ENCODE measurements at regions of chr6 and their contacts with region 1.

Region 1: DNA sequence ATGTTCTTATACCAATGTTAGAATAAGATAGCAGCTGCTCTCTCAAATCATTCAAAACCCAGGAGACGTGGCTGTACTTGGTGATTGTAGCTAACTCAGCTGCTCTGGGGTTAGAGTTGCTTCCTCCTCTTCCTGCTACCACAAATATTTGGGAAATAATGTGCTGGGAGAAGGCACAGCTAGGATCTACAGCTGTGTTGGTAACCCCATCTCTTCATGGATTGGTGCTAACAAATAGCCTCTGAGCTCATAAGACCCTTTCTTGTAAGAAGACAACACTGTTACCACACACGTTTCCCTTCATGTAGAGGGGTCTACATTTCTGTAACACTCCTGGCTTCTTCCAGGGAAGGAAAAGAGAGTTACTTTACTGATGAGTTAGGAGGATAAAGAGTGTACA is 911.0 kb upstream of the CITED2 start:
- DNase-seq: peak; percentile 63
- H3K4me3 ChIP-seq: no peak overlapping the region
- H3K27ac ChIP-seq: peak overlapping the region; percentile 91
- H3K4me1 ChIP-seq: peaks cover 36% of the 10 kb centered on the region
- H3K27me3 ChIP-seq: no peaks in the 10 kb centered on the region
- CTCF ChIP-seq: no peak

Region 2: DNA sequence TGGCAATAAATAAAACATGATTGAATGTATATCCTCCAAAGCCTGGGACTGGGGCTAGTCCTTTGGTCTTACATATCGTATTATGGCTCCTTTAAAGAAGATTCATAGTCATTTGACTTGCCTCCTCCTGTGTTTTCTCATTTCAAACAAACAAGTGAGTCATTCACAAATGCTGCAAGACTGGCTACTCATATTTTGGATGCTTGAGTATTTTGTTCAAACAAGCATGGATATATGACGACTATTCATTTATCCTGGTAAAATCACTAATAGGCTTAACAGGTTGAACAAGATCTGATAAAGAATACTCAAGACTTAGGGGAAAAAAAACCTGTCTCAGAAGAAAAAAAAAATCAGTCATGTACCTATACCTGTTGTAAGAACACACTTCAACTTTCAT is 1623.0 kb before region 1 on chr6:
- CTCF ChIA-PET with region 1: no interaction called
- POLR2A ChIA-PET with region 1: no interaction called
- intact Hi-C with region 1: no loop called
- DNase-seq: no peak
- H3K4me3 ChIP-seq: no peak overlapping the region
- H3K27ac ChIP-seq: no peak overlapping the region
- H3K4me1 ChIP-seq: peaks cover 4% of the 10 kb centered on the region
- H3K27me3 ChIP-seq: no peaks in the 10 kb centered on the region
- CTCF ChIP-seq: no peak

Region 3: DNA sequence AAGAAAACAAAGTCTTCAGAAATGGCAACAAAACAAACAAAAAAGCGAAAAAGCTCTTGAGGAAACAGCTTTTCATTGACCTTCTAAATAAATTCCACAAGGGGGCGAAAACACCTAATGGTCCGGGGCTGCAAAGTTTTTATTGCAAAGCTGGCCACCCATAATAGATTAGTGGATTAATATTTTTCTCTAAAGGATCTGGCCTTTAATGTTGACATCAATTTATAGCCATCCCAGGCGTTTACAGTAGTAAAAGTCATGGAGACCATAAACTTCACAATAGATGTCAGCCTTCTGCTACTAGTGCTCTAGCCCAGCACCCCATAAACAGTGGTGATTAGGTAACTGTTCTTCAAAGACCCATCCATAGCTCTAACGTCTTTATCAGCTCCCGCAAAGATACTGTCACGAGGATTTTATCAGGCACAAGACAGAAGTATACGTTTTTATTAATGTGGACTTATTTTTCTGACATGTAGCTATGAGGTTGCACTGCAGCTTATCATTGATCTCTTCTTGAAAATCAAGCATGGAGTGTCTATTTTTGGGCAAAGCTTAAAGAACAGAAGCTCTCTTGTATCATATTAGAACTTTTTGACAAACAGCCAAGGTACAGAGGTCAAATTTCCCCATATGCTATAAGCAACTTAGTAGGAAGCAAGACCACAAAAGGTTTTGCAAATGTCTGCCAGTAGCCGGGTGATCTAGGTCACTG is 915.7 kb before region 1 on chr6:
- CTCF ChIA-PET with region 1: interaction called, 3 read pairs
- POLR2A ChIA-PET with region 1: interaction called, 4 read pairs
- intact Hi-C with region 1: loop called (anchors 2 kb)
- DNase-seq: peak; percentile 86
- H3K4me3 ChIP-seq: peak overlapping the region; percentile 87
- H3K27ac ChIP-seq: peak overlapping the region; percentile 96
- H3K4me1 ChIP-seq: peaks cover 43% of the 10 kb centered on the region
- H3K27me3 ChIP-seq: no peaks in the 10 kb centered on the region
- CTCF ChIP-seq: peak; percentile 76

Region 4: DNA sequence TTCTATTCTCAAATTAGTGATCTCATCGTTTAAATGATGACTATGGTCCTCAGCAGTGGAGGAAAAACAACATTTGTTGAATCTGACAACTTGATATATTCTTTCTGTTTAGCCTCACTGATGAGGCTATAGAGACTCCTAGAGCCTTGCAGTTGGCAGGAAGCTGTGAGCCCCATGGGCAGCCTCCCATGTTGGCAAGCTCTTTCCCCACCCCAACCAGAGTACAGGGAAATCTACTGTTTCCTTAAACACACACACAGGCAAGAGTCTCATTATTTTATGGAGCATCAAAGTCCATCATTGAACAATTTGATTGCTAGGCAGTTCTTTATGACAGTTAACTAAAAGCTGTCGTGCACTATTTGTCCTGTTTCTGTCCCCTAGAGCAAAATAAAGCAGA is 412.8 kb before region 1 on chr6:
- CTCF ChIA-PET with region 1: no interaction called
- POLR2A ChIA-PET with region 1: no interaction called
- intact Hi-C with region 1: loop called (anchors 5 kb)
- DNase-seq: peak; percentile 58
- H3K4me3 ChIP-seq: no peak overlapping the region
- H3K27ac ChIP-seq: peak overlapping the region; percentile 98
- H3K4me1 ChIP-seq: peaks cover 48% of the 10 kb centered on the region
- H3K27me3 ChIP-seq: no peaks in the 10 kb centered on the region
- CTCF ChIP-seq: no peak

Region 5: GRCh38 chr6:140441256-140441655 is 155.8 kb after region 1 on chr6:
- CTCF ChIA-PET with region 1: no interaction called
- POLR2A ChIA-PET with region 1: interaction called, 3 read pairs
- intact Hi-C with region 1: loop called (anchors 1 kb)
- DNase-seq: peak; percentile 93
- H3K4me3 ChIP-seq: no peak overlapping the region
- H3K27ac ChIP-seq: peak overlapping the region; percentile 78
- H3K4me1 ChIP-seq: peaks cover 47% of the 10 kb centered on the region
- H3K27me3 ChIP-seq: no peaks in the 10 kb centered on the region
- CTCF ChIP-seq: peak; percentile 70

Region 6: GRCh38 chr6:140921366-140922226 is 636.1 kb after region 1 on chr6:
- CTCF ChIA-PET with region 1: interaction called, 3 read pairs
- POLR2A ChIA-PET with region 1: no interaction called
- intact Hi-C with region 1: loop called (anchors 5 kb)
- DNase-seq: peak; percentile 84
- H3K4me3 ChIP-seq: no peak overlapping the region
- H3K27ac ChIP-seq: peak overlapping the region; percentile 24
- H3K4me1 ChIP-seq: peaks cover 10% of the 10 kb centered on the region
- H3K27me3 ChIP-seq: no peaks in the 10 kb centered on the region
- CTCF ChIP-seq: peak; percentile 84